CD8-positive, alpha-beta T cell (primary cell): ENCODE measurements at regions of chr18 and their contacts with region 1.

Region 1: DNA sequence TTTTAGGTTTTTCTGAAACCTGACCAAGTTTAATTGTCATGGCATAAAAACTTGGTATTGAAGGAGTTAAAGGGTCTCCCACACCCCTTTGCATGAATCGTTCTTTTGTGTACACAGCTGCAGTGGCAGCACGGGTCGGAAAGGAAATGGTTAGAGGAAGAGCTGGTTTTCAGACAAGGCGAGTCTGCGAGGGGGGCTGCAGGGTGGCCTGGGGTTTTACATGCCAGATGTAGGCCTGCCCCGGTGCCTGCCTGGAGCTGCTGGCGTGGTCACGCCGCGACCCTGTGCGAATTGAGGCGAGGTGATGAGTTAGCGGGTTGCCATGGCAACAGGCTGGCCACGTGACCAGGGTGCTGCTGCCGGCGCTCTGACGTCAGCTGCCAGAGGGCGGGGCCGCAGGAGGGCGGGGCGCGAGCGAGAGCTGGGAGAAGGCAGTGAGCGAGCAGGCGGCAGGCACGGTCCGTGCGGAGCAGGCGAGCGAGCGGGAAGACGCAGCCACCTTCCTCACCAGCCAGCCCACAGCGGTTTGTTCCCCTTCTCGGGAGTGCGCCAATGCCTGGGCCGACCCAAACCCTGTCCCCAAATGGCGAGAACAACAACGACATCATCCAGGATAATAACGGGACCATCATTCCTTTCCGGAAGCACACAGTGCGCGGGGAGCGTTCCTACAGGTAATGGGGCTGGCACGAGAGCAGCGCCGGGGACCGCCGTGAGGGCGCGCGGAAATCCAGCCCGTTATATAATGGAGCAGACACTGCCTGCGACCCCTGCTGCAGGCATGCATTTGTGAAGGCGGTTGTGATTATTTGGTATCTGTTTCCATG is at the start of gene MAPRE2:
- DNase-seq: peak; percentile 99 to 100 (median 100)
- ATAC-seq: peak; percentile 79
- H3K4me3 ChIP-seq: peak within 1 kb of the TSS; percentile 87 to 90
- H3K4me3 Mint-ChIP-seq: peak within 1 kb of the TSS; percentile 98
- H3K27ac ChIP-seq: peak within 1 kb of the TSS; percentile 93 to 96
- H3K27ac Mint-ChIP-seq: peak within 1 kb of the TSS; percentile 96
- H3K4me1 ChIP-seq: peaks cover 42% of the 10 kb centered on the region
- H3K4me1 Mint-ChIP-seq: peaks cover 44% of the 10 kb centered on the region
- H3K27me3 ChIP-seq: no peaks in the 10 kb centered on the region
- H3K27me3 Mint-ChIP-seq: no peaks in the 10 kb centered on the region
- CTCF ChIP-seq: no peak
- total RNA-seq, gene MAPRE2: 137 to 145 TPM

Region 2: GRCh38 chr18:35005963-35006577 is 35.1 kb before region 1 on chr18:
- CTCF ChIA-PET with region 1: interaction called, 4 read pairs
- POLR2A ChIA-PET with region 1: interaction called, 4 read pairs
- intact Hi-C with region 1: loop called in 1 of 2 experiments (anchors 1 kb)
- DNase-seq: peak in 3 of 9 experiments; percentile 7 to 75 (median 66)
- ATAC-seq: peak; percentile 84
- H3K4me3 ChIP-seq: no peak overlapping the region
- H3K4me3 Mint-ChIP-seq: no peak overlapping the region
- H3K27ac ChIP-seq: no peak overlapping the region
- H3K27ac Mint-ChIP-seq: no peak overlapping the region
- H3K4me1 ChIP-seq: no peaks in the 10 kb centered on the region
- H3K4me1 Mint-ChIP-seq: no peaks in the 10 kb centered on the region
- H3K27me3 ChIP-seq: no peaks in the 10 kb centered on the region
- H3K27me3 Mint-ChIP-seq: no peaks in the 10 kb centered on the region
- CTCF ChIP-seq: peak; percentile 69

Region 3: DNA sequence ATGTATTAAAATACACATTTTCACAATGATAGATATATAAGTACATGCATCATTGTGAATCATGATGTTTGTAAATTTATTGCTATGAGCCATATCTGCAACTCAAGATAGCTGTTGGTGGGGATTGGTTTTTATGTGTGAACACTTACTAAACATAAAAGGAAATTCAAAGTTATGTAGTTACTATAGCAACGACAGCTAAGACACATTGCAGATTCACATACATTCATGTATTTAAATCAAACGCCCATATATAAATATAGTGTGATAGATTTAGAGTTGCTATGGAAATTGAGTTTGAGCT is 65.6 kb after region 1 on chr18:
- CTCF ChIA-PET with region 1: no interaction called
- POLR2A ChIA-PET with region 1: no interaction called
- intact Hi-C with region 1: loop called (anchors 2 to 5 kb)
- DNase-seq: peak in 2 of 9 experiments; percentile 46 to 72
- ATAC-seq: peak; percentile 69
- H3K4me3 ChIP-seq: no peak overlapping the region
- H3K4me3 Mint-ChIP-seq: no peak overlapping the region
- H3K27ac ChIP-seq: peak overlapping the region; percentile 53 to 64
- H3K27ac Mint-ChIP-seq: peak overlapping the region; percentile 77
- H3K4me1 ChIP-seq: peaks cover 37% of the 10 kb centered on the region
- H3K4me1 Mint-ChIP-seq: peaks cover 65% of the 10 kb centered on the region
- H3K27me3 ChIP-seq: no peaks in the 10 kb centered on the region
- H3K27me3 Mint-ChIP-seq: no peaks in the 10 kb centered on the region
- CTCF ChIP-seq: no peak

Region 4: GRCh38 chr18:35290073-35290735 is 249.0 kb after region 1 on chr18 and contains the start of gene ZSCAN30:
- CTCF ChIA-PET with region 1: no interaction called
- POLR2A ChIA-PET with region 1: no interaction called
- intact Hi-C with region 1: loop called (anchors 1 to 2 kb)
- DNase-seq: peak; percentile 92 to 98 (median 96)
- ATAC-seq: peak; percentile 94
- H3K4me3 ChIP-seq: peak within 1 kb of the TSS; percentile 78 to 82
- H3K4me3 Mint-ChIP-seq: peak within 1 kb of the TSS; percentile 99
- H3K27ac ChIP-seq: peak within 1 kb of the TSS; percentile 69 to 85
- H3K27ac Mint-ChIP-seq: peak within 1 kb of the TSS; percentile 99
- H3K4me1 ChIP-seq: peaks cover 17% of the 10 kb centered on the region
- H3K4me1 Mint-ChIP-seq: peaks cover 70% of the 10 kb centered on the region
- H3K27me3 ChIP-seq: no peaks in the 10 kb centered on the region
- H3K27me3 Mint-ChIP-seq: no peaks in the 10 kb centered on the region
- CTCF ChIP-seq: no peak
- total RNA-seq, gene ZSCAN30: 6.2 to 6.3 TPM

Region 5: GRCh38 chr18:35972197-35973052 is 931.2 kb after region 1 on chr18 and contains the start of gene RMP24:
- CTCF ChIA-PET with region 1: no interaction called
- POLR2A ChIA-PET with region 1: interaction called, 4 read pairs
- intact Hi-C with region 1: loop called (anchors 2 to 5 kb)
- DNase-seq: peak; percentile 88 to 97 (median 93)
- ATAC-seq: peak; percentile 84
- H3K4me3 ChIP-seq: peak within 1 kb of the TSS; percentile 60 to 89
- H3K4me3 Mint-ChIP-seq: peak within 1 kb of the TSS; percentile 94
- H3K27ac ChIP-seq: peak within 1 kb of the TSS; percentile 57 to 90
- H3K27ac Mint-ChIP-seq: peak within 1 kb of the TSS; percentile 98
- H3K4me1 ChIP-seq: peaks cover 35% of the 10 kb centered on the region
- H3K4me1 Mint-ChIP-seq: peaks cover 65% of the 10 kb centered on the region
- H3K27me3 ChIP-seq: no peaks in the 10 kb centered on the region
- H3K27me3 Mint-ChIP-seq: no peaks in the 10 kb centered on the region
- CTCF ChIP-seq: no peak

Region 6: GRCh38 chr18:36828630-36829361 is 1787.6 kb after region 1 on chr18 and contains the starts of genes KIAA1328 and TPGS2:
- CTCF ChIA-PET with region 1: no interaction called
- POLR2A ChIA-PET with region 1: no interaction called
- intact Hi-C with region 1: loop called in 1 of 2 experiments (anchors 2 kb)
- DNase-seq: peak; percentile 75 to 94 (median 85)
- ATAC-seq: peak; percentile 90
- H3K4me3 ChIP-seq: peak within 1 kb of the TSS; percentile 99
- H3K4me3 Mint-ChIP-seq: peak within 1 kb of the TSS; percentile 81
- H3K27ac ChIP-seq: peak within 1 kb of the TSS; percentile 70 to 71
- H3K27ac Mint-ChIP-seq: peak within 1 kb of the TSS; percentile 93
- H3K4me1 ChIP-seq: peaks cover 22% of the 10 kb centered on the region
- H3K4me1 Mint-ChIP-seq: peaks cover 42% of the 10 kb centered on the region
- H3K27me3 ChIP-seq: no peaks in the 10 kb centered on the region
- H3K27me3 Mint-ChIP-seq: no peaks in the 10 kb centered on the region
- CTCF ChIP-seq: peak; percentile 58
- total RNA-seq, gene KIAA1328: 6.9 to 7.0 TPM
- total RNA-seq, gene TPGS2: 14.5 to 16.4 TPM